Thyroid gland (tissue), 4 donors: ENCODE measurements at regions of chr1 and their contacts with region 1.

Region 1: GRCh38 chr1:155250633-155251449 is 4.4 kb downstream of the ENTREP3 start:
- DNase-seq: peak; percentile 91 to 94
- H3K4me3 ChIP-seq: peak overlapping the region in 1 of 3 donors; percentile 18
- H3K27ac ChIP-seq: no peak overlapping the region
- H3K4me1 ChIP-seq: peaks cover 14 to 25% of the 10 kb centered on the region in 2 donors
- H3K27me3 ChIP-seq: no peaks in the 10 kb centered on the region
- CTCF ChIP-seq: peak; percentile 86 to 99 (median 99)
- POLR2A ChIP-seq: no peak

Region 2: DNA sequence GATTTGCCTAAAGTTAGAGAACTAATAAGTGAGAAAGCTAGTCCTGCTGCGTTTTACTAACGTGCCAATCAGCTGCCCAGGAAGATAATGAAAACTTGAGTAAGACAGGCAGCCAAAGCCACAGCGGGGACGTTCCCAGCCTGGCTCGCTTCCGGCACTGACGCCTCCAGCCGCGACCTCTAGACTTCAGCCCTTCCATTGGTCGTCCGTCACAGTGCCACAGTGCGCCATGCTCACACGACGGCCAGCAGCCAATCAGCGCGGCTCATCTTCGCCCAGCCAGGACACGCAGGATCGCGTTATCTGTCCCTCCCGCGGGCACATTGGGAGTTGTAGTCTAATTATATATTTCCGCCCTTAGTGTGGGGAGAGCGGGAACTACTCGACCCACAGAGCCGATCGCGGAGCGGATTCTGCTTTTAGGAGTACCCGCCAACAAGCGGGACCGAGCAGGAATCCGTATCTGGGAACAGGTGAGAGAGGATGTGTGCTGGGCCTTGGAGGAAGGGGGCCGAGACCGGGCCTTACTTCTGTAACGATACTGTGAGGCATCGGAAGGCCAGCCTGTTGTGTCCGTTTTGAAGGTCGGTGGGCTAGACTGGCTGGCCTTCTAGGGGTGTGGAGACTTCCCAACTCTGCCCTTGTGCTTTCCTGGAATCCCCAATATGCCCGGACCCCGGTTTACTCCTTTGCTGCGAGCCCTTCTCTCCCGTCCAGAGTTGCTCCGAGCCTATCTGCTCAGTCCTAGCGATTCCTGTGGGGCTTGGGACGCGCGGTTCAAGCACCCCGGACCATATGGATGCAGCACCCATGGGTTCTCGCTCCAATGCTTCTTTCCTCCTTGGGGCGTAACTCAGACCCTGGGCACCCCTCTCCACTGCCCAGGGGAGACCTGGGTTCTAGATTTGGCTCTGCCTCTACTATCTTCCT is 57.9 kb after region 1 on chr1 and contains the start of gene FDPS:
- intact Hi-C with region 1: no loop called
- DNase-seq: peak; percentile 99
- H3K4me3 ChIP-seq: peak within 1 kb of the TSS; percentile 34 to 55 (median 52)
- H3K27ac ChIP-seq: peak within 1 kb of the TSS; percentile 66 to 82 (median 79)
- H3K4me1 ChIP-seq: peaks cover 13 to 20% of the 10 kb centered on the region in 2 donors
- H3K27me3 ChIP-seq: no peaks in the 10 kb centered on the region
- CTCF ChIP-seq: peak in 4 of 6 experiments; percentile 10 to 44 (median 34)
- POLR2A ChIP-seq: peak in 1 of 2 donors; percentile 80
- total RNA-seq, gene FDPS: 89.0 to 103 (median 98.9) TPM

Region 3: GRCh38 chr1:155323798-155324610 is 73.2 kb after region 1 on chr1:
- intact Hi-C with region 1: loop called (anchors 5 kb)
- DNase-seq: peak; percentile 97
- H3K4me3 ChIP-seq: peak overlapping the region; percentile 66 to 84 (median 84)
- H3K27ac ChIP-seq: peak overlapping the region; percentile 80 to 97 (median 92)
- H3K4me1 ChIP-seq: peaks cover 30 to 33% of the 10 kb centered on the region in 2 donors
- H3K27me3 ChIP-seq: no peaks in the 10 kb centered on the region
- CTCF ChIP-seq: no peak
- POLR2A ChIP-seq: peak in 1 of 2 donors; percentile 77

Region 4: GRCh38 chr1:155352631-155353030 is 101.8 kb after region 1 on chr1:
- intact Hi-C with region 1: no loop called
- DNase-seq: no peak
- H3K4me3 ChIP-seq: no peak overlapping the region
- H3K27ac ChIP-seq: no peak overlapping the region
- H3K4me1 ChIP-seq: no peaks in the 10 kb centered on the region
- H3K27me3 ChIP-seq: no peaks in the 10 kb centered on the region
- CTCF ChIP-seq: no peak
- POLR2A ChIP-seq: no peak

Region 5: DNA sequence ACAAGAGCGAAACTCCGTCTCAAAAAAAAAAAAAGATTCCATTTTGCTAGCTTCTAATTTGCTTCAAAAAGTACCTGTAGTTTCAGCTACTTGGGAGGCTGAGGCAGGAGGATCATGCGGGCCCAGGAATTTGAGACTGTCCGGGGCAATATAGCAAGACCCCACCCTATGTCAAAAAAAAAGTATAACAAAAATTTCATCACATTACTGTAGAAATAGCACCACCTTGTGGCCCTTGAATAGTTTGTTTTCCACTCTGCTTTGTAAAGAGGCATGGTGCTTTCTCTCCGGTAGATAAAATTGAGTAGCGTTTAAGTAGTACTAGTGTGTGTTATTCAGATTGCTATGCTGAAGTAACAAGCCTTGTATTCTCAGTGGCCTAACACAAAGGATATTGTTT is 340.9 kb after region 1 on chr1:
- intact Hi-C with region 1: loop called (anchors 5 kb)
- DNase-seq: no peak
- H3K4me3 ChIP-seq: no peak overlapping the region
- H3K27ac ChIP-seq: no peak overlapping the region
- H3K4me1 ChIP-seq: no peaks in the 10 kb centered on the region
- H3K27me3 ChIP-seq: no peaks in the 10 kb centered on the region
- CTCF ChIP-seq: peak in 4 of 6 experiments; percentile 43 to 63 (median 56)
- POLR2A ChIP-seq: no peak